ENCODE measurements at regions of chrX and their contacts with region 1.

Region 1: GRCh38 chrX:130079824-130080406 is 30.4 kb downstream of the ELF4 start:
- DNase-seq: no peak
- H3K4me3 ChIP-seq: no peak overlapping the region
- H3K27ac ChIP-seq: no peak overlapping the region
- H3K4me1 ChIP-seq: peaks cover 0 to 15% (median 5%) of the 10 kb centered on the region in 4 experiments; a peak in 5 of 7 replicates
- H3K27me3 ChIP-seq: no peaks in the 10 kb centered on the region
- CTCF ChIP-seq: peak in 2 of 3 experiments; percentile 64 to 74; a peak in 3 of 4 replicates
- EP300 ChIP-seq: no peak
- POLR2A ChIP-seq: no peak
- RAD21 ChIP-seq: peak; percentile 80 to 86

Region 2: DNA sequence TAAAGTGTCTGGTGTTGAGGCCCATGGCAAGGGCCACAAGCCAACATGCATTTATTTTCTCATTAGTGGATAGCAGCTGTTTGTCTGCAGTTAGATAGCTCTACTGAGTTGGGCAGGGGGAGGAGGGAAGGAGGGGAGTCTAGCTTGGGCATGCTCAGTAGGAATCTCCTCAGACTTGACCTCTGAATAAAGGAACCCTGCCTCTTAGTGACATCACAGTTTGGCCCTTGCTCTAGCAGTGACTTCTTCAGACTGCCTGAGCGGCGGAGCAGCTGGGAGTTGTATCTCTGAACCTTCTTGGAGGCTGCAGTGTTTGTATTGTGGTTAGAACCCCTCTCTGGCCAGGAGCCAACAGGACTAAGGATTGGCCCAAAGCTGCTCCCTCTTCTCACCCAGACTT is 40.1 kb before region 1 on chrX:
- CTCF ChIA-PET with region 1: no interaction called
- POLR2A ChIA-PET with region 1: no interaction called
- DNase-seq: no peak
- H3K4me3 ChIP-seq: no peak overlapping the region
- H3K27ac ChIP-seq: no peak overlapping the region
- H3K4me1 ChIP-seq: no peaks in the 10 kb centered on the region
- H3K27me3 ChIP-seq: no peaks in the 10 kb centered on the region
- CTCF ChIP-seq: no peak
- EP300 ChIP-seq: no peak
- POLR2A ChIP-seq: no peak
- RAD21 ChIP-seq: no peak

Region 3: DNA sequence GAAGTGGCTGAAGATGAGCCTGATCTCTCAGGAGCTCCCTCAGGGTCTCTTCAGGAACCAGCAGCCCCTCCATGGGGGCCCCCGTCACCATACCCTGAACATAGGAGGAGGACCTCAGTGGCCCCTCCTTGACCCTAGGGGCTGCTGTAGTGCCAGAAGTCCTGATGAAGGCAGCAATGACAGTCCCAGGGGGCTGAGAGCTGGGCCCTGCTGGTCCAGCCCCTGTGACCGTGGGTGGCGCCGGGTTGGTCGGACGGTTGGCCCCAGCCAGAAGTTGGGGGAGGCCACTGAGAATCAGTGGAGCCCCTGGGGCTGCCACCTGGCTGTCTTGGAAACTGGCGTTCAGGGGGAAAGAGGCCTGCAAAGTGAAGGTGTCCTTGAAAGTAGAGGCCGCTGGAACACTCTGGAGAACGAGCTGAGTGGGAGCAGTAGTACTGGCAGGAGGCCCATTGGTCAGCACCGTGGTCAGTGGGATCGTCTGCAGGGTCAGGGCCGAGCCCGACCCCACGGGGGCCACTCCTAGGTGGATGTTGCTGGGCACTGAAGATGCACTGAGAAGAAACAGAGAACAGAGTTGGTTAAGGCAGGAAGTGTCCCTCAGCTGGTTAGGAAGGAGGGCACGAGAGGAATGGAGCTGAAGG is 12.8 kb before region 1 on chrX:
- CTCF ChIA-PET with region 1: interaction called, 23 read pairs
- POLR2A ChIA-PET with region 1: interaction called, 3 read pairs
- DNase-seq: no peak
- H3K4me3 ChIP-seq: no peak overlapping the region
- H3K27ac ChIP-seq: no peak overlapping the region
- H3K4me1 ChIP-seq: peaks cover 0 to under 1% (median 0%) of the 10 kb centered on the region in 4 experiments; a peak in 1 of 7 replicates
- H3K27me3 ChIP-seq: no peaks in the 10 kb centered on the region
- CTCF ChIP-seq: no peak
- EP300 ChIP-seq: no peak
- POLR2A ChIP-seq: no peak
- RAD21 ChIP-seq: no peak

Region 4: DNA sequence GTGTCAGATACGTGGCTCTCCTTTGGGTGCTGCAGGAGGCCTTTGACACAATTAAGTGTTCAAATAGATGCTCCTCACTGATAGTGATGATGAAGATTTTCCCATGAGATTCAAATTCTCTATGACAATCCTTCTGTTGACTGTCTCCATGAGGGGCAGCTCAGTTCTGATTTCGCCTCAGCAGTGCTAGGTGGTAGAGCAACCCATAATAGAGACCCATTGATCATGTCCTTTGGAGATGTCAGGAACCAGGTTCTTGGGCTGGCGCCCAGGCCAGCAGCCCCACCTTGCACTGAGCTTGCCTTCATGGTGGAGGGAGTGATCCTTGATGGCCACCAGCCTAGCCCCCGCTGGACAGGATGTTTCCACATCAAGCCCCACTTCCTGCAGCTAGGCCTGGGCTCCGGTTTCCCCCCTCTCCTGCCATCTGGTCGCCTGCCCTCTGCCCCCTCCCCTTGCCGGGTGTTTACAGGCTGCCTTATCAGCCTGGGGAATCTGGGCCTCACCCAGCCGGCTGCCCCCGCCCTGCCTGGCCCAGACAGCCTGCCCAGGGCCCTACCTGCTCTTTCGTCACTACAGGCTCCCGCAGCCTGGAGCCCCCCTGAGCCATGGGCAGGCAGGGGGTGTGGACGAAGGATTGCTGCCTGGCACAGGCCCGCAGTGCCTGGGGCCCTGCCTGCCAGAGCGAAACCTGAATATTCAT is 17.7 kb after region 1 on chrX:
- CTCF ChIA-PET with region 1: interaction called, 10 read pairs
- POLR2A ChIA-PET with region 1: no interaction called
- DNase-seq: no peak
- H3K4me3 ChIP-seq: no peak overlapping the region
- H3K27ac ChIP-seq: no peak overlapping the region
- H3K4me1 ChIP-seq: peaks cover 0 to 5% (median under 1%) of the 10 kb centered on the region in 4 experiments; a peak in 2 of 7 replicates
- H3K27me3 ChIP-seq: no peaks in the 10 kb centered on the region
- CTCF ChIP-seq: no peak
- EP300 ChIP-seq: no peak
- POLR2A ChIP-seq: no peak
- RAD21 ChIP-seq: no peak

Region 5: GRCh38 chrX:130110379-130111219 is 30.7 kb after region 1 on chrX and contains the start of gene ELF4:
- CTCF ChIA-PET with region 1: interaction called, 23 read pairs
- POLR2A ChIA-PET with region 1: no interaction called
- DNase-seq: no peak
- H3K4me3 ChIP-seq: peak within 1 kb of the TSS; percentile 32 to 60 (median 40)
- H3K27ac ChIP-seq: no peak within 1 kb of the TSS
- H3K4me1 ChIP-seq: peaks cover 0 to 11% (median 0%) of the 10 kb centered on the region in 4 experiments; a peak in 3 of 7 replicates
- H3K27me3 ChIP-seq: peaks cover 20 to 37% (median 32%) of the 10 kb centered on the region in 4 experiments
- CTCF ChIP-seq: no peak
- EP300 ChIP-seq: no peak
- POLR2A ChIP-seq: no peak
- RAD21 ChIP-seq: no peak
- total RNA-seq, gene ELF4: 1.8 and 2.3 TPM in 2 replicates

Region 6: DNA sequence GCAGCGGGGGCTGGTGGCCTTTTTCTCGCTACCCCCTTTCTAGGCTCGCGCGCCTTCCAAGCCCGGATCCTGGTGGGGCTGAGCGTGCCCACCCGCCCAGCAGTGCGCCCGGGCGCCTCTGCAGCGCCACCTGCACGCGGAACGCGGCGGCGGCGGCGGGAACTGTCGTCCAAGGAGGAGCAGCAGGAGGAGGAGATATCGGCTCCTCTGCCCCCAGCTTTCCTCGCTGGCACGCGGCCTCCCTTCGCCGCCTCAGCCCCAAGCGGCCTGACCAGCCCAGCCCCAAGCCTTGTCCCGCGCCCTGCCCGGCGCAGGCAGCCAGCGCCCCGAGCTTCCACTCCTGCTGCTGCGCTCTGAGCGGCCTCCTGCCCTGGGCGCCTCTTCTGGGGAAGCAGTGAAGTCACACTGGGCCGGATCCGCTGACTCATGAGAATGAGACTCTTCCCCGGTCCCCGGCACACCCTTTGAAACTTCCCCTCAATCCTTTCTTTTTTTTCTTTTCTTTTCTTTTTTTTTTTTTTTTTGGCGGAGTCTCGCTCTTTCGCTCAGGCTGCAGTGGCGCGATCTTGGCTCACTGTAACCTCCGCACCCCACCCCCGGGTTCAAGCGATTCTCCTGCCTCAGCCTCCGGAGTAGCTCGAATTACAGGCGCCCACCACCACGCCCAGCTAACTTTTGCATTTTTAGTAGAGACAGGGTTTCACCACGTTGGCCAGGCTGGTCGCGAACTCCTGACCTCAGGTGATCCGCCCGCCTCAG is 41.0 kb after region 1 on chrX:
- CTCF ChIA-PET with region 1: interaction called, 36 read pairs
- POLR2A ChIA-PET with region 1: interaction called, 3 read pairs
- DNase-seq: peak in 1 of 2 experiments; percentile 79
- H3K4me3 ChIP-seq: peak overlapping the region; percentile 26 to 61 (median 29)
- H3K27ac ChIP-seq: no peak overlapping the region
- H3K4me1 ChIP-seq: no peaks in the 10 kb centered on the region; a peak in 1 of 7 replicates
- H3K27me3 ChIP-seq: peaks cover 0 to 9% (median 2%) of the 10 kb centered on the region in 4 experiments; a peak in 3 of 7 replicates
- CTCF ChIP-seq: peak; percentile 49 to 68 (median 64)
- EP300 ChIP-seq: no peak
- POLR2A ChIP-seq: peak in 1 of 2 experiments; percentile 16; a peak in 1 of 3 replicates
- RAD21 ChIP-seq: peak; percentile 21 to 52; a peak in 3 of 4 replicates

Measured in H1 (cell line).